CD8-positive, alpha-beta T cell (primary cell): ENCODE measurements at regions of chr20 and their contacts with region 1.

Region 1: GRCh38 chr20:25178563-25179438 is 16.7 kb upstream of the ENTPD6 start:
- DNase-seq: peak in 3 of 9 experiments; percentile 8 to 67 (median 56)
- ATAC-seq: peak; percentile 71
- H3K4me3 ChIP-seq: no peak overlapping the region
- H3K4me3 Mint-ChIP-seq: no peak overlapping the region
- H3K27ac ChIP-seq: no peak overlapping the region
- H3K27ac Mint-ChIP-seq: no peak overlapping the region
- H3K4me1 ChIP-seq: no peaks in the 10 kb centered on the region
- H3K4me1 Mint-ChIP-seq: no peaks in the 10 kb centered on the region
- H3K27me3 ChIP-seq: no peaks in the 10 kb centered on the region
- H3K27me3 Mint-ChIP-seq: peaks cover 4% of the 10 kb centered on the region
- CTCF ChIP-seq: peak; percentile 77

Region 2: GRCh38 chr20:25165128-25165527 is 13.7 kb before region 1 on chr20:
- CTCF ChIA-PET with region 1: interaction called, 11 read pairs
- POLR2A ChIA-PET with region 1: no interaction called
- intact Hi-C with region 1: no loop called
- DNase-seq: no peak
- ATAC-seq: no peak
- H3K4me3 ChIP-seq: no peak overlapping the region
- H3K4me3 Mint-ChIP-seq: no peak overlapping the region
- H3K27ac ChIP-seq: no peak overlapping the region
- H3K27ac Mint-ChIP-seq: no peak overlapping the region
- H3K4me1 ChIP-seq: no peaks in the 10 kb centered on the region
- H3K4me1 Mint-ChIP-seq: no peaks in the 10 kb centered on the region
- H3K27me3 ChIP-seq: peaks cover 0 to 4% of the 10 kb centered on the region in 2 experiments
- H3K27me3 Mint-ChIP-seq: peaks cover 11% of the 10 kb centered on the region
- CTCF ChIP-seq: no peak